ENCODE measurements at regions of chr1 and their contacts with region 1.

Region 1: DNA sequence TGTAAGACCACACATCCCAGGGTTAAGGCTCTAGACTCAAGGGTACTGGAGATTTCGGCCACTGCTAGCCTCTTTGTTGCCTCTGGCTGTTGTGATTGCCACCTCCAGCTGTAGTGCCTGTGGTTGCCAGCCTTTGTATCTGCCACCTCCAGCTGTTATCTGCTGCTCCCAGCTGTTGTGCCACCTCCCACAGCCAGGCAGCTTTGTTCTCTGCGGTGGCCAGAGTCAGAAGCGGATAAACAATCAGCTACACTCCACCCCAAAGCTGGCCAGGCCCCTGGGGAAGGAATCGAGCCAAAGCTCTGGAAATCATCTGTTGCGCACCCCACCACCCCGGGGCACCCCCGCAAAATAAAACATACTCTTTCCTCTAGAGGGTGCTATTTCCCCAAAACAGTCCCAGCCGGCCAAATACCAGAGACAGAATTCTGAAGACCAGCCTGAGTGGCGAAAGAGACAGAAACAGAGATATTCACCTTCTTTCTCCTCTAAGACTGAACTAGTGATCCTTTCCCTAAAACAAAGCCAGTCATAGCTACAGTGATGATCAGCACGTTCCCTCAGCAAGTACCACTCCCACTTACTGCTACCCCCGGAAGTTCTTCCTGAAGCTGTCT is 14.8 kb upstream of the PIGM start:
- DNase-seq: peak; percentile 67

Region 2: GRCh38 chr1:160031365-160032164 is 15.0 kb before region 1 on chr1 and contains the start of gene PIGM:
- CTCF ChIA-PET with region 1: interaction called, 13 read pairs
- POLR2A ChIA-PET with region 1: interaction called, 3 read pairs
- DNase-seq: peak; percentile 98

Region 3: GRCh38 chr1:160058087-160058486 is 11.5 kb after region 1 on chr1:
- CTCF ChIA-PET with region 1: interaction called, 10 read pairs
- POLR2A ChIA-PET with region 1: no interaction called
- DNase-seq: peak; percentile 46

Region 4: DNA sequence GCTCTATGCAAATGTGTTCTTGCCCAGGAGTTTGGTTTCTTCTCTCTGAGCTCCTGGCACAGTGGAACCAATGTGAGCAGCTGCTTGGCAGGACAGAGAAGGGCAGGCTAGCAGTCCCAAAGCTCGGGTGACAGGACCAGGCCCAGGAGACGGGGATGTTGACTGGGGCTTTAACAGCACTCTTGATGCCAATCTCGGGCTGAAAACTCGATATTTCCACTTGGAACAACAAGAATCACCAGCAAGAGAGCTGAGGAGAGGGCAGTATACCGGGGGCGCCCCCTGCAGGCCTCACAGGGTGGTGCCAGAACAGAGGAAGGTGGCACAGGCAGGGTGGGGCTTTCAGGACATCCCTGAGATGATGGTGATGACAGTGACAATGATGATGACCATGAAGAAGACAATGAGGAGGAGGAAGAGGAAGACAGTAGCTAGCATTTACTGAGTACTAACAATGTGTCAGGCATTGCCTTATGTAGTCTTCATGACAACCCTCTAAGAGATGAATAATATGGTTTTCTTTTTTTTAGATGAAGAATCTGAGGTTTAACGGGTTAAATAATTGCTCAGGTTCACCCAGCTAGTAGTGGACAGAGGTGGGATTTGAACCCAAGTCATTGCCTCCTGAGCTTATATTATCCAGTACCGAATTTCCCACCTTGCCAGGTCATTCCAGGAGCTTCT is 32.1 kb after region 1 on chr1:
- CTCF ChIA-PET with region 1: interaction called, 43 read pairs
- POLR2A ChIA-PET with region 1: no interaction called
- DNase-seq: peak; percentile 81

Region 5: GRCh38 chr1:160085686-160086455 is 39.3 kb after region 1 on chr1:
- CTCF ChIA-PET with region 1: interaction called, 13 read pairs
- POLR2A ChIA-PET with region 1: no interaction called
- DNase-seq: peak; percentile 93

Measured in HEK293T (cell line).